ENCODE measurements at regions of chr1 and their contacts with region 1.

Region 1: DNA sequence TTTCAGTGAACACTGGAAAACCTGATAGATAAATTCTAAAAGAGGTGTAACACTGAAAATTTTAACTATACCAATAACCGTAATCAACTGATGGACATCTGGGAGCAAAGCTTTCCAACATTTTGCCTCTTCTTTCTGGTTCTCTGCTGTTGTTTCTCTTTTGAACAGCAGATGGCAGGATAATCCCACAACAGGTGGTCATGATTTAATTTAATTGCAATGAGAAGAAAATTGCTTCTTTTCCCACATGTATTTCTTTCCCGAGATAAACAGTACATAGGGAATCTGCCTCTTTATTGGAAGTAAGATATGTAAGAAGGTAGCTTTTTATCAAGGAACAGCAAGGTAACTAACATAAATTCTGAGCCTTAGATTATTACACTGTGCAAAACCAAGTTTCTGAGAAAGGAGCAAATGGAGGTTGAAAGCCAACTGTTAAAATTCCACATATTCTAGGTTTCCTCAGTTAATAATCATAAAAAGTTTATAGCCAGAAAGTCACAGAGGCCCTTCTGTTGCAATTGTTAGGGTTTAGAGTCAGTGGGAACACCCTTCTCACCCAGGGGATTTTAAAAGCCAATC is 72.9 kb downstream of the RPS6KA1 start:
- DNase-seq: peak; percentile 52 to 72 (median 70)
- H3K4me3 ChIP-seq: no peak overlapping the region
- H3K4me3 Mint-ChIP-seq: no peak overlapping the region
- H3K27ac ChIP-seq: no peak overlapping the region
- H3K27ac Mint-ChIP-seq: peak overlapping the region in 1 of 7 donors; percentile 35
- H3K4me1 ChIP-seq: peaks cover 10% of the 10 kb centered on the region
- H3K4me1 Mint-ChIP-seq: peaks cover 6 to 9% (median 7%) of the 10 kb centered on the region in 4 donors
- H3K27me3 ChIP-seq: no peaks in the 10 kb centered on the region
- H3K27me3 Mint-ChIP-seq: no peaks in the 10 kb centered on the region

Region 2: DNA sequence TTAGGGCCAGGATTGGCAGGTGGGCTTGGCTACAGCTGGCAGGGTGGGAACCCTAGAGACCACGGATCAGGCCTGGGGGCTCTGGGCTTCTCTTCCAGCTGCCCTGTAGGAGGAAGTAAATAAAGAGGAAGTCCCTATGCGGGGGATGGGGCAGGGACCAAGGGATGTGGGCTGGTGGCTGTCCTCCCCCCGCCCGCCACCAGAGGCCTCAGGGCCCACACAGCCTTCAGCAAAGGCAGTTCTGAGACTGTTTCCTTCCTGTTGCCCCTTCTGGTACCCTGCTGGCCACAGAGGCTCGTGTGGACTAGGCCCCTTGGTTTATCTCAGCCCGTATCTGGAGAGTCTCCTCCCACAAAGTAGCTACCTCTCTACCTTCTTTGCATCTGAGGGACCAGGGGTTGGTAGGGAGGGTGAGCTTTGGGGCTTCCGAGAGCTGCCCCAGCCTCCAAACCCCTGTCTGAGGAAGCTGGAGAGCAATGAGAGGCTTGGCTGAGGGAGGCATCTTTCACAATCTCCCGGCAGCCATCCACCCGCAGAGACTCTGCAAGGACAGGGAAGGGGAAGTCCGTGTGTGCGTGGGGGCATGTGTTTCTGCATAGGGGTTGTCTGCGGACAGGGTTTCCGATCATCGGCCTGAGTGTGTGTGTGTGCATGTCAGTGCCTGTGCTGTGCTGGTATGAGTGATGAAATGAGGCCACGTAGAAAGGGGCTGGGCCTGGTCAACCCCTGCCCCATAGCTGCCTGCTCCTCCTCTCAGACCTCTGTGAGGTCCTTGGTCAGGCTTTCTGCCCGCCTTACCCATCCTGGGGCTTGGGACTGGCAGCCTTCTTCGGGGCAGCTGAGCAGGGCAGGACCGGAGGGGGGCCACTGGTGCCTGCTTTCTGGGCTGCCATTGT is 60.4 kb before region 1 on chr1:
- CTCF ChIA-PET with region 1: interaction called, 61 read pairs
- POLR2A ChIA-PET with region 1: no interaction called
- intact Hi-C with region 1: no loop called
- DNase-seq: peak; percentile 70 to 90 (median 71)
- H3K4me3 ChIP-seq: peak overlapping the region; percentile 12 to 34
- H3K4me3 Mint-ChIP-seq: peak overlapping the region; percentile 78 to 89 (median 84)
- H3K27ac ChIP-seq: peak overlapping the region; percentile 75
- H3K27ac Mint-ChIP-seq: peak overlapping the region; percentile 94 to 98 (median 95)
- H3K4me1 ChIP-seq: peaks cover 97% of the 10 kb centered on the region
- H3K4me1 Mint-ChIP-seq: peaks cover 61 to 96% (median 84%) of the 10 kb centered on the region in 4 donors
- H3K27me3 ChIP-seq: no peaks in the 10 kb centered on the region
- H3K27me3 Mint-ChIP-seq: no peaks in the 10 kb centered on the region

Region 3: GRCh38 chr1:26695356-26696118 is 93.1 kb after region 1 on chr1 and contains the start of gene ARID1A:
- CTCF ChIA-PET with region 1: interaction called, 35 read pairs
- POLR2A ChIA-PET with region 1: interaction called, 21 read pairs
- intact Hi-C with region 1: loop called (anchors 5 kb)
- DNase-seq: peak; percentile 96 to 98 (median 97)
- H3K4me3 ChIP-seq: peak within 1 kb of the TSS; percentile 87 to 96
- H3K4me3 Mint-ChIP-seq: peak within 1 kb of the TSS; percentile 88 to 98 (median 94)
- H3K27ac ChIP-seq: peak within 1 kb of the TSS; percentile 76
- H3K27ac Mint-ChIP-seq: peak within 1 kb of the TSS; percentile 94 to 98 (median 96)
- H3K4me1 ChIP-seq: peaks cover 52% of the 10 kb centered on the region
- H3K4me1 Mint-ChIP-seq: peaks cover 19 to 35% (median 29%) of the 10 kb centered on the region in 4 donors
- H3K27me3 ChIP-seq: no peaks in the 10 kb centered on the region
- H3K27me3 Mint-ChIP-seq: no peaks in the 10 kb centered on the region
- total RNA-seq, gene ARID1A: 112 to 127 TPM

Region 4: GRCh38 chr1:26799479-26800142 is 197.1 kb after region 1 on chr1:
- CTCF ChIA-PET with region 1: interaction called, 39 read pairs
- POLR2A ChIA-PET with region 1: interaction called, 3 read pairs
- intact Hi-C with region 1: no loop called
- DNase-seq: no peak
- H3K4me3 ChIP-seq: no peak overlapping the region
- H3K4me3 Mint-ChIP-seq: peak overlapping the region in 7 of 8 donors; percentile 49 to 83 (median 79)
- H3K27ac ChIP-seq: peak overlapping the region; percentile 30
- H3K27ac Mint-ChIP-seq: peak overlapping the region; percentile 91 to 97 (median 92)
- H3K4me1 ChIP-seq: peaks cover 35% of the 10 kb centered on the region
- H3K4me1 Mint-ChIP-seq: peaks cover 26 to 38% (median 32%) of the 10 kb centered on the region in 4 donors
- H3K27me3 ChIP-seq: no peaks in the 10 kb centered on the region
- H3K27me3 Mint-ChIP-seq: no peaks in the 10 kb centered on the region

Region 5: DNA sequence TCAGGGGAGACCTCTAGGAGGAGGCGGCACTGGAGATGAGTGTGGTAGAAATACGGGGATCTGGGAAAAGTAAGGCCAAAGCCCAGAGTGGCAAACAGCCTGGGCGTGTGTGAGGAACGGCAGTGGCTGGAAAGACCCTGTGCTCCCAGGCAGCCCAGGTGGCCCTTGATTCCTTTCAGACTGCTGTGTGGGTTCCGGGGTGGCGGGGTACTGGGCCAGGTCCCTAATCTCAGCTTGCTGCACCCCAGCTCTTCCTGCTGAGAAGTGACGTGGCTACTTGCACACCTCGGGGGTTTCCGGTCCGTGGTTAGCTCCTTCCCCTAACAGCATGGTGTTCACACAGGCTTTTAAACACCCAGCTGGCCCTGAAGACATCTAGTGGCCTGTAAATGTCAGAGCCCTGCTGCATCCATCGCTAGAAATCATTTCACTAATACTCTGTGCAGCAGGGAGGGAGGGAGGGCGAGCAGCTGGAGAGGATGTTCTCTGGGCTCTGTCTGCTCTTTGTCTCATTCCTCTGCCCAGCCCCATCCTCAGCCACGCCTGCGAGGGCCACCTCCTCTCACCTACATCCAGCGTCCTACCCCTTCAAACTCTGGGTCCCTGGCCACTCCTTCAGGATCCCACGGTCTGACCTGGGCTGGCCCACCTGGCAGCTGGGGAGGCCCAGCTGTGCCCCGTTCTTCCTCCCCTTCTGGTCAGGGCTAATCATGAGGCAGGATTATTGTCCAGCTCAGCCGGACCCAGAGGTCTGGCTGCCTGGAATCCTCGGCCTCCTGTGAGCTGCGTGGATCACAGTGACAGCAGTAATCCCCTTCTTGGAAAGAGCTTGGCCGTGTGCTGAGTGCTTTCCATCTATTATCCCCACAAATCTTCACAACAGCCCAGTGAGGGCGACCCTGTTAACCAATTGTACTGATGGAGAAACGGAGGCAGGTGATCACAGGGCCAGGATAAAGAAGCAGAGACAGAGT is 231.2 kb after region 1 on chr1:
- CTCF ChIA-PET with region 1: interaction called, 21 read pairs
- POLR2A ChIA-PET with region 1: interaction called, 3 read pairs
- intact Hi-C with region 1: loop called (anchors 1 kb)
- DNase-seq: peak; percentile 89 to 98 (median 94)
- H3K4me3 ChIP-seq: peak overlapping the region in 1 of 2 donors; percentile 23
- H3K4me3 Mint-ChIP-seq: peak overlapping the region; percentile 74 to 92 (median 85)
- H3K27ac ChIP-seq: peak overlapping the region; percentile 97
- H3K27ac Mint-ChIP-seq: peak overlapping the region; percentile 98 to 100 (median 100)
- H3K4me1 ChIP-seq: peaks cover 74% of the 10 kb centered on the region
- H3K4me1 Mint-ChIP-seq: peaks cover 60 to 87% (median 73%) of the 10 kb centered on the region in 4 donors
- H3K27me3 ChIP-seq: no peaks in the 10 kb centered on the region
- H3K27me3 Mint-ChIP-seq: no peaks in the 10 kb centered on the region

Region 6: DNA sequence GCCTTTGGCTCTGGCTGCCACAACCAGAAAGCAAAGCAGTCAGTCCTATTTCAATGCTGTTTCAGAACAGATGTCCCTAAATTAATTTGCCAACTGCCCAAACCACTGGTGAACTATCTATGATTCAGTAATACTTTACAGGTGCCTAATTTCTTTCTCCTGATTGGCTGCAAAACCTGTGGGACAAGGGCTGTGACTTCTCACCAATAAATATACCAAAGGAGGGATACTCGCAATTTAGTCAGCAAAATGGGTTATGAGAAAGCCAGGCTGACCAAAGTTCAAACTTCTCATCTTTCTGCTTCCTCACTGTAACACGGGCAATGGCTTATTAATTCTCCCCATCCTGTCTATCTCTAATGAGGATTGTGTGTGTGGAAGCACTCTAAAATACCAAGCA is 274.9 kb after region 1 on chr1:
- CTCF ChIA-PET with region 1: interaction called, 22 read pairs
- POLR2A ChIA-PET with region 1: no interaction called
- intact Hi-C with region 1: loop called (anchors 1 kb)
- DNase-seq: no peak
- H3K4me3 ChIP-seq: no peak overlapping the region
- H3K4me3 Mint-ChIP-seq: no peak overlapping the region
- H3K27ac ChIP-seq: no peak overlapping the region
- H3K27ac Mint-ChIP-seq: no peak overlapping the region
- H3K4me1 ChIP-seq: no peaks in the 10 kb centered on the region
- H3K4me1 Mint-ChIP-seq: peaks cover 0 to 1% (median under 1%) of the 10 kb centered on the region in 4 donors
- H3K27me3 ChIP-seq: no peaks in the 10 kb centered on the region
- H3K27me3 Mint-ChIP-seq: no peaks in the 10 kb centered on the region